Ovary (tissue), 10 donors: ENCODE measurements at regions of chr17 and their contacts with region 1.

Region 1: DNA sequence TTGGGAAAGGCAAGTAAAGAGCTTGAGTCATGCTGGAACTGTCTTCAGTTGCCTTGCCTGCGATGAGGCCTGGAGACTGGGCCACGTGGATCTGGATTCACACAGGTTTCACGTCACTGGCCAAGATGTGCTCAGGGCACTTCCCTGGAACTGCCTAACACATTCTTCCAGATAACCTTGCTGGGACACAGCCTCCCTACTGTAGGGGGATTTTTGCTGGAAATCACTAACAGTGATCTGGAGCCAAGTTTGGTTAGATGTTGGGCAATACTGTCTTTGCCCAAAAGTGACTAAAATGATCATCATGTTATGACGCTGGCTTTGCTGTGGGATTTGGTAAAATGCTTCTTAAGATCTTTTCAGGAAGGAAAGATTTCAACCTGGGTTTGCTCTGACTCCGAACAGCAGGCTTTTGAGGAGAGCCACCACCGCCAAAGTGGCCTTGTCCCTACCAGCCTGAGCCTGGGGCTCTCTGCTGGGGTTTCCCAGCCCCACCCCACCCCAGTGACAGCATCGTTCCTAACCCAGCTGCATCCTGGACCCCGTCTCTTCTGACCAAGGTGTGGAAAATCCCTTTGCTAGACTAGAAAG is 14.7 kb downstream of the C1QTNF1 start:
- DNase-seq: peak in 1 of 5 donors; percentile 45
- H3K4me3 ChIP-seq: no peak overlapping the region
- H3K27ac ChIP-seq: no peak overlapping the region
- H3K4me1 ChIP-seq: peaks cover 9% of the 10 kb centered on the region
- H3K27me3 ChIP-seq: no peaks in the 10 kb centered on the region
- CTCF ChIP-seq: no peak
- EP300 ChIP-seq: peak; percentile 50
- POLR2A ChIP-seq: no peak

Region 2: DNA sequence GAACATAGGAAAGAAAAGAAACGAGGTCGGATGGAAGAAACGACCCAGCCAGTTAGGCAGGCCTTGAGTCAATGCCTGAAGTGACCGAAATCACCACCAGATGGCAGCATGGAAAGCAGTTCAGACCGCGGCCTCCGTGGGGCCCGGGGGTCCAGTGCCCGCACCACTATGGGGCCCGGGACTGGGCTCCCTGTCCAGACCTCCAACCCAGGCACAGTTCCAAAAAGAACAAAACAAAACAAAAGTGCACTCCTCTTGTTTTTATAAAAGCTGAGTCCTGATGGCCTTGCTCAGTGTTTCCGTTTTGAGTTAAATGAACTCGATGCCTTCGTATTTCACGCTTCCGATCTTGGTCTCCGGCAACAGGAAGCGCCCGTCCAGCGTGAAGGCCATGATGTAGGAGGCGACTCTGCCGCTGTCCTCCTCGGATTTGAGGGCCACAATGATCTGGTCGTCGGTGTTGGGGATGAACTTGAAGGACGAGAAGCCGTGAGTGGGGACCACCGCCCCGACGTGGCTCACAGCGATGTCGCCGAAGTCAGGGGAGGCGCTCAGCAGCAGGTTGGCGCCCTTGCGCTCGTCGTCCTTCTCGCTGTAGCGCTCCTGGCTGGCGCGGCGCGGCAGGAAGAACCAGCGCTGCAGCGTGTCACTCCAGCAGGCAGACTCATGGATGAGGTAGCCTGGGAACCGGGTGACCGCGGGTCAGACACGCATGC is 45.2 kb before region 1 on chr17:
- intact Hi-C with region 1: loop called in 1 of 4 experiments (anchors 2 kb)
- DNase-seq: peak; percentile 64 to 80 (median 78)
- H3K4me3 ChIP-seq: no peak overlapping the region
- H3K27ac ChIP-seq: peak overlapping the region in 1 of 2 donors; percentile 18
- H3K4me1 ChIP-seq: peaks cover 3% of the 10 kb centered on the region
- H3K27me3 ChIP-seq: no peaks in the 10 kb centered on the region
- CTCF ChIP-seq: peak; percentile 65 to 76 (median 70)
- EP300 ChIP-seq: no peak
- POLR2A ChIP-seq: no peak